CD8-positive, alpha-beta memory T cell (primary cell): ENCODE measurements at regions of chr6 and their contacts with region 1.

Region 1: DNA sequence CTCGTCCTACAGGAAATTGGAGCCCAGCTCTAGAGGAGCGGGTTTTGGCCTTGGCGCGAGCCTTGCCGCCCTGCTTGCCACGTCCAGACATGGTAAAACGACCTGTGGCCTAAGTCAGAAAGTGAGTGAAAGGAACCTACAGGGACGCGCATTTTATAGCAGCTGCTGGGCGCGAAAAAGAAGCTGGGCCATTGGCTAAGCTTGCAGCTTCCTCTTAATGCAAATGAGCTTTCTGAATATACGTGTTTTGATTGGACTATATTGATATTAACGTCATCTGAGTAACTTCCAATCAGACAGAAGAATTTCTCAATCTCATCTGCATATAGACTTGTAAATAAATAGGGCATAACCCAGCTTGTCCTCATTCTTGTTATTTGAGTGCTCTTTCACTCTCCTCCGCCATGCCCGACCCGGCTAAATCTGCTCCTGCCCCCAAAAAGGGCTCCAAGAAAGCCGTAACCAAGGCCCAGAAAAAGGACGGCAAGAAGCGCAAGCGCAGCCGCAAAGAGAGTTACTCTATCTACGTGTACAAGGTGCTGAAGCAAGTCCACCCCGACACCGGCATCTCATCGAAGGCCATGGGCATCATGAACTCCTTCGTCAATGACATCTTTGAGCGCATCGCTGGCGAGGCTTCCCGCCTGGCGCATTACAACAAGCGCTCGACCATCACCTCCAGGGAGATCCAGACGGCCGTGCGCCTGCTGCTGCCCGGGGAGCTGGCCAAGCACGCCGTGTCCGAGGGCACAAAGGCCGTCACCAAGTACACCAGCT is 18.9 kb downstream of the OR2B2 start:
- DNase-seq: peak; percentile 75 to 95 (median 91)
- H3K4me3 ChIP-seq: peak overlapping the region; percentile 82
- H3K4me3 Mint-ChIP-seq: no peak overlapping the region
- H3K27ac ChIP-seq: peak overlapping the region; percentile 79
- H3K27ac Mint-ChIP-seq: peak overlapping the region in 3 of 8 donors; percentile 94 to 97 (median 97)
- H3K4me1 ChIP-seq: peaks cover 19% of the 10 kb centered on the region
- H3K4me1 Mint-ChIP-seq: peaks cover 29 to 44% (median 40%) of the 10 kb centered on the region in 3 donors
- H3K27me3 ChIP-seq: no peaks in the 10 kb centered on the region
- H3K27me3 Mint-ChIP-seq: peaks cover 0 to 2% of the 10 kb centered on the region in 2 donors

Region 2: GRCh38 chr6:26025894-26026832 is 1867.1 kb before region 1 on chr6:
- CTCF ChIA-PET with region 1: interaction called, 3 read pairs
- POLR2A ChIA-PET with region 1: interaction called, 10 read pairs
- DNase-seq: peak; percentile 86 to 95 (median 94)
- H3K4me3 ChIP-seq: peak overlapping the region; percentile 59
- H3K4me3 Mint-ChIP-seq: peak overlapping the region; percentile 85 to 95 (median 93)
- H3K27ac ChIP-seq: peak overlapping the region; percentile 86
- H3K27ac Mint-ChIP-seq: peak overlapping the region; percentile 93 to 100 (median 98)
- H3K4me1 ChIP-seq: peaks cover 21% of the 10 kb centered on the region
- H3K4me1 Mint-ChIP-seq: peaks cover 30 to 77% (median 55%) of the 10 kb centered on the region in 3 donors
- H3K27me3 ChIP-seq: no peaks in the 10 kb centered on the region
- H3K27me3 Mint-ChIP-seq: peaks cover 0 to 9% of the 10 kb centered on the region in 2 donors

Region 3: GRCh38 chr6:27146706-27147505 is 746.3 kb before region 1 on chr6:
- CTCF ChIA-PET with region 1: interaction called, 7 read pairs
- POLR2A ChIA-PET with region 1: interaction called, 43 read pairs
- DNase-seq: peak; percentile 42 to 93 (median 89)
- H3K4me3 ChIP-seq: peak overlapping the region; percentile 97
- H3K4me3 Mint-ChIP-seq: no peak overlapping the region
- H3K27ac ChIP-seq: peak overlapping the region; percentile 91
- H3K27ac Mint-ChIP-seq: no peak overlapping the region
- H3K4me1 ChIP-seq: peaks cover 20% of the 10 kb centered on the region
- H3K4me1 Mint-ChIP-seq: peaks cover 7 to 21% (median 10%) of the 10 kb centered on the region in 3 donors
- H3K27me3 ChIP-seq: no peaks in the 10 kb centered on the region
- H3K27me3 Mint-ChIP-seq: no peaks in the 10 kb centered on the region

Region 4: GRCh38 chr6:27753668-27754407 is 139.4 kb before region 1 on chr6:
- CTCF ChIA-PET with region 1: interaction called, 23 read pairs
- POLR2A ChIA-PET with region 1: interaction called, 8 read pairs
- DNase-seq: peak; percentile 27 to 63 (median 47)
- H3K4me3 ChIP-seq: peak overlapping the region; percentile 71
- H3K4me3 Mint-ChIP-seq: peak overlapping the region; percentile 84 to 97 (median 86)
- H3K27ac ChIP-seq: peak overlapping the region; percentile 39
- H3K27ac Mint-ChIP-seq: peak overlapping the region; percentile 33 to 99 (median 76)
- H3K4me1 ChIP-seq: peaks cover 19% of the 10 kb centered on the region
- H3K4me1 Mint-ChIP-seq: peaks cover 25 to 38% (median 32%) of the 10 kb centered on the region in 3 donors
- H3K27me3 ChIP-seq: no peaks in the 10 kb centered on the region
- H3K27me3 Mint-ChIP-seq: peaks cover 0 to 10% of the 10 kb centered on the region in 2 donors

Region 5: GRCh38 chr6:27809939-27810767 is 83.1 kb before region 1 on chr6:
- CTCF ChIA-PET with region 1: interaction called, 119 read pairs
- POLR2A ChIA-PET with region 1: interaction called, 164 read pairs
- DNase-seq: peak; percentile 64 to 93 (median 88)
- H3K4me3 ChIP-seq: peak overlapping the region; percentile 78
- H3K4me3 Mint-ChIP-seq: peak overlapping the region; percentile 85 to 97 (median 94)
- H3K27ac ChIP-seq: peak overlapping the region; percentile 93
- H3K27ac Mint-ChIP-seq: peak overlapping the region; percentile 94 to 100 (median 97)
- H3K4me1 ChIP-seq: peaks cover 38% of the 10 kb centered on the region
- H3K4me1 Mint-ChIP-seq: peaks cover 54 to 69% (median 65%) of the 10 kb centered on the region in 3 donors
- H3K27me3 ChIP-seq: no peaks in the 10 kb centered on the region
- H3K27me3 Mint-ChIP-seq: peaks cover 0 to 6% of the 10 kb centered on the region in 2 donors

Region 6: DNA sequence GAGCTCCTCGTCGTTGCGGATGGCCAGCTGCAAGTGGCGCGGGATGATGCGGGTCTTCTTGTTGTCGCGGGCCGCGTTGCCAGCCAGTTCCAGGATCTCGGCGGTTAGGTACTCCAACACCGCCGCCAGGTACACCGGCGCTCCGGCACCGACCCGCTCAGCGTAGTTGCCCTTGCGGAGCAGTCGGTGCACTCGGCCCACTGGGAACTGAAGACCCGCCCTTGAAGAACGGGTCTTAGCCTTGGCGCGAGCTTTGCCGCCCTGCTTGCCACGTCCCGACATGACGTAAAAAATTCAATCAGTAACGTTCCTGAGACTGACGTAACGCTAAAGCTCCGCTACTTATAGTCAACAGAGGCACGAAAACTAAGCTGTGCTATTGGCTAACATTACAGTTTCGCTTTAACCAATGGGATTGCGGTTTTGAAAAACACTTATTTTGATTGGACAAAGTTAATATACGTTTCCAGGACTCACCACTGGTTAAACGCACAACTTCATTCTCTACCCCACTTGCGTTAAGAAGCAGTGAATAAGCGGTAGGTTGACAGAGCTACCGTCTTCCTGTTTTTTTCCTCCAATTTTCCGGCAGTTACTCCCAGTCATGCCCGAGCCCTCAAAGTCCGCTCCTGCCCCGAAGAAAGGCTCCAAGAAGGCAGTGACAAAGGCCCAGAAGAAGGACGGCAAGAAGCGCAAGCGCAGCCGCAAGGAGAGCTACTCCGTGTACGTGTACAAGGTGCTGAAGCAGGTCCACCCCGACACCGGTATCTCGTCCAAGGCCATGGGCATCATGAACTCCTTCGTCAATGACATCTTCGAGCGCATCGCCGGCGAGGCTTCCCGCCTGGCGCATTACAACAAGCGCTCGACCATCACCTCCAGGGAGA is 54.9 kb before region 1 on chr6:
- CTCF ChIA-PET with region 1: interaction called, 87 read pairs
- POLR2A ChIA-PET with region 1: interaction called, 233 read pairs
- DNase-seq: peak; percentile 67 to 93 (median 92)
- H3K4me3 ChIP-seq: peak overlapping the region; percentile 71
- H3K4me3 Mint-ChIP-seq: no peak overlapping the region
- H3K27ac ChIP-seq: peak overlapping the region; percentile 99
- H3K27ac Mint-ChIP-seq: no peak overlapping the region
- H3K4me1 ChIP-seq: peaks cover 30% of the 10 kb centered on the region
- H3K4me1 Mint-ChIP-seq: peaks cover 12 to 23% (median 19%) of the 10 kb centered on the region in 3 donors
- H3K27me3 ChIP-seq: no peaks in the 10 kb centered on the region
- H3K27me3 Mint-ChIP-seq: peaks cover 5 to 13% of the 10 kb centered on the region in 2 donors

Region 7: GRCh38 chr6:27966044-27966443 is 72.8 kb after region 1 on chr6:
- CTCF ChIA-PET with region 1: no interaction called
- POLR2A ChIA-PET with region 1: no interaction called
- DNase-seq: no peak
- H3K4me3 ChIP-seq: no peak overlapping the region
- H3K4me3 Mint-ChIP-seq: no peak overlapping the region
- H3K27ac ChIP-seq: no peak overlapping the region
- H3K27ac Mint-ChIP-seq: no peak overlapping the region
- H3K4me1 ChIP-seq: no peaks in the 10 kb centered on the region
- H3K4me1 Mint-ChIP-seq: no peaks in the 10 kb centered on the region
- H3K27me3 ChIP-seq: peaks cover 5% of the 10 kb centered on the region
- H3K27me3 Mint-ChIP-seq: peaks cover 13 to 69% of the 10 kb centered on the region in 2 donors

Region 8: GRCh38 chr6:28895134-28895812 is 1002.0 kb after region 1 on chr6:
- CTCF ChIA-PET with region 1: no interaction called
- POLR2A ChIA-PET with region 1: interaction called, 11 read pairs
- DNase-seq: peak; percentile 78 to 96 (median 90)
- H3K4me3 ChIP-seq: peak overlapping the region; percentile 91
- H3K4me3 Mint-ChIP-seq: peak overlapping the region; percentile 98 to 100 (median 99)
- H3K27ac ChIP-seq: peak overlapping the region; percentile 99
- H3K27ac Mint-ChIP-seq: peak overlapping the region; percentile 99 to 100 (median 99)
- H3K4me1 ChIP-seq: peaks cover 7% of the 10 kb centered on the region
- H3K4me1 Mint-ChIP-seq: peaks cover 15 to 27% (median 22%) of the 10 kb centered on the region in 3 donors
- H3K27me3 ChIP-seq: no peaks in the 10 kb centered on the region
- H3K27me3 Mint-ChIP-seq: peaks cover 3 to 10% of the 10 kb centered on the region in 2 donors